Naive thymus-derived CD4-positive, alpha-beta T cell (primary cell): ENCODE measurements at regions of chr2 and their contacts with region 1.

Region 1: DNA sequence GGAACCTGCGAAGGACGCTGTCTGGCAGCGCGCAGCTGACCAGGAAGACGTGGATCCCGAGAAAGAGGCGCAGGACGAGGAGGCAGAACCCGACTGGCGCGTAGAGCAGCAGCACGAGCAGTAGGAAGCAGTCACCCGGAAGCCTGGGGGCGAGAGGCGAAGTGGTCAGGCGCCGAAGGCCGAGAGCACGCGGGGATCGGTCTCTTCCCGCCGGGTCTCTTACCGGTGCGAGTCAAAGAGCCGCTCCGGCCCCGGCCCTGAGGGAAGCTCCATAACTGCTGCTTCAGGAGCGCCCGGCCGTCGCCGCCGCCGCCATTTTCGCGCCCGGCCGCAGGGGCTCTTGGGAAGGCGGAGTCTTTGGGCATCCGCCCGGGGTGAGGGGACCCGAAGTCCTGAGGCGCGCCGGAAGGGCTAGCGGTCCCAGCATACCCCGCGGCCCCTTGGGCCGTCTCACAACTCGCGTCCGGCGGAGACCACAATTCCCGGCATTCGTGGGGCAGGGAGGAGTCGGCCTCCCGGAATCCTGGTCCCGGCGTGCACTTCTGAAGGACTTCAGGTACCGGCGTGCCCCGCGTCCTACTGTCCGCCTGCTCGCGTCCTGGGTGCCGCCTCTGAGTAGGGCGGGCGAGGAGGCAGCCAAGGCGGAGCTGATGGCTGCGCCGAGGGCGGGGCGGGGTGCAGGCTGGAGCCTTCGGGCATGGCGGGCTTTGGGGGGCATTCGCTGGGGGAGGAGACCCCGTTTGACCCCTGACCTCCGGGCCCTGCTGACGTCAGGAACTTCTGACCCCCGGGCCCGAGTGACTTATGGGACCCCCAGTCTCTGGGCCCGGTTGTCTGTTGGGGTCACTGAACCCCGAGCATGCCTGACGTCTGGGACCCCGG is at the starts of genes AUP1 and HTRA2:
- DNase-seq: peak; percentile 75 to 92 (median 83)
- ATAC-seq: peak; percentile 90
- H3K4me3 ChIP-seq: peak within 1 kb of the TSS; percentile 94
- H3K4me3 Mint-ChIP-seq: peak within 1 kb of the TSS; percentile 91 to 98 (median 94)
- H3K27ac ChIP-seq: peak within 1 kb of the TSS; percentile 85
- H3K27ac Mint-ChIP-seq: peak within 1 kb of the TSS; percentile 88 to 97 (median 93)
- H3K4me1 ChIP-seq: peaks cover 11 to 25% of the 10 kb centered on the region in 2 donors
- H3K4me1 Mint-ChIP-seq: peaks cover 25 to 50% (median 43%) of the 10 kb centered on the region in 7 donors
- H3K27me3 ChIP-seq: no peaks in the 10 kb centered on the region
- H3K27me3 Mint-ChIP-seq: no peaks in the 10 kb centered on the region
- total RNA-seq, gene AUP1: 121 to 160 (median 144) TPM
- total RNA-seq, gene HTRA2: 16.9 to 46.2 (median 37.7) TPM

Region 2: GRCh38 chr2:73970850-73971471 is 558.6 kb before region 1 on chr2:
- CTCF ChIA-PET with region 1: no interaction called
- POLR2A ChIA-PET with region 1: no interaction called
- intact Hi-C with region 1: loop called in 1 of 2 experiments (anchors 10 kb)
- DNase-seq: peak in 7 of 9 donors; percentile 60 to 84 (median 72)
- ATAC-seq: peak; percentile 90
- H3K4me3 ChIP-seq: peak overlapping the region; percentile 36
- H3K4me3 Mint-ChIP-seq: peak overlapping the region; percentile 75 to 88 (median 81)
- H3K27ac ChIP-seq: peak overlapping the region; percentile 62
- H3K27ac Mint-ChIP-seq: peak overlapping the region; percentile 84 to 99 (median 93)
- H3K4me1 ChIP-seq: peaks cover 25 to 44% of the 10 kb centered on the region in 2 donors
- H3K4me1 Mint-ChIP-seq: peaks cover 48 to 88% (median 82%) of the 10 kb centered on the region in 7 donors
- H3K27me3 ChIP-seq: no peaks in the 10 kb centered on the region
- H3K27me3 Mint-ChIP-seq: no peaks in the 10 kb centered on the region

Region 3: DNA sequence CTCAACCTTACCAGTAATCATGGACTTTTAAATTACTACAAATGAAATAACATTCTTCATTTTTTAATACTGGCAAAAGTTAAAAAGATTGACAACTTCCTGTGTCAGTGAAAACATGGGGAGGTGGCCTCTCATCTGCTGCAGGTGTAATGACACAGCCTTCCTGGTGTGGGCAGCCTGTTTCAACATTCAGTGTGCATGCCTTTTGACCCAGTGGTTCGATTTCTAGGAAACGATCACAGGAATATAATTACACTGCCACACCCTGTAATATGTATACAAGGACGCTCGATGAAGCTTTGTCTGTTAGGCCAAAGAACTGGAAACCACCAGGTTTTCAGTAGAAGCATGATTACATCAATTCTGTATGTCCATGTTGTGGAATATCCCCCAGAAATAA is 262.5 kb before region 1 on chr2:
- CTCF ChIA-PET with region 1: interaction called, 3 read pairs
- POLR2A ChIA-PET with region 1: no interaction called
- intact Hi-C with region 1: loop called in 1 of 2 experiments (anchors 5 kb)
- DNase-seq: peak in 8 of 9 donors; percentile 41 to 77 (median 66)
- ATAC-seq: peak; percentile 95
- H3K4me3 ChIP-seq: peak overlapping the region; percentile 1
- H3K4me3 Mint-ChIP-seq: peak overlapping the region; percentile 39 to 77 (median 72)
- H3K27ac ChIP-seq: peak overlapping the region; percentile 25
- H3K27ac Mint-ChIP-seq: peak overlapping the region; percentile 9 to 90 (median 80)
- H3K4me1 ChIP-seq: peaks cover 7 to 14% of the 10 kb centered on the region in 2 donors
- H3K4me1 Mint-ChIP-seq: peaks cover 10 to 37% (median 22%) of the 10 kb centered on the region in 7 donors
- H3K27me3 ChIP-seq: no peaks in the 10 kb centered on the region
- H3K27me3 Mint-ChIP-seq: no peaks in the 10 kb centered on the region

Region 4: DNA sequence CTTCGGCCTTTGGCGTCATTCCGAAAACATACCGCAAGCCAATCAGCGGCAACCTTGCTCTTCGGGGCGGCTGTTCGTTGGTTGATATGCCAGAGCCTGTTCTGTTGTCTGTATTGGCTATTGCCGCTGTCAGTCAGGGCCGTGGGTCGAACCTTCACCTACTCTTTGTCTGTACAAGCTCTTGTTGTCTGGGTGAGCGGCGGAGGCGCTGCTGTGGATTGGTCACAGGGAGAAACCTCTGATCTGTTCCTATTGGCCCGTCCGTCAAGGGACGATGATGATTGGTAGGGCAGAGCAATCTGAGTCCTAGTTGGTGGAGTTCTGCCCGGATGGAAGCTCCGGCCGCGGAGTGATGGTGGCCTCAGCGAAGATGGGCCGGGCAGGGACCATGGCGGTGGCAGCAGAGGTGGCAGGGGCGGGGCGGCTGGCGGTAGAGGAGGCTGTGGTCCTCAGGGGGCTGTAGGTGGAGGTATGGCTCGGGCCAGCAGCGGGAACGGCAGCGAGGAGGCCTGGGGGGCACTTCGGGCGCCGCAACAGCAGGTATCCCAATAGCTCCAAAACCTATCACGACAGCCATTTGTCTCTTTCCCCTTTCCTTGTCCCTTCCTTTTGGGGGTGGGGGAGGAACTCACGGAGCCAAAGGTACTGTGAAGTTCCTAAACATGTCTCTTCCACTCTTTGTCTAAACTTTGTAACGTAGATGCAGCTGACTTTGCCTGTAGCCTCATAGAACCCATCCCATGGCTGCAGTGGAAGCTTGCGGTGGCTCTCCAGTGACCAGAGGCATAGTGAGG is 71.3 kb before region 1 on chr2 and contains the start of gene WBP1:
- CTCF ChIA-PET with region 1: interaction called, 6 read pairs
- POLR2A ChIA-PET with region 1: interaction called, 21 read pairs
- intact Hi-C with region 1: loop called (anchors 1 kb)
- DNase-seq: peak in 8 of 9 donors; percentile 85 to 100 (median 100)
- ATAC-seq: peak; percentile 89
- H3K4me3 ChIP-seq: peak within 1 kb of the TSS; percentile 70
- H3K4me3 Mint-ChIP-seq: peak within 1 kb of the TSS; percentile 87 to 99 (median 96)
- H3K27ac ChIP-seq: peak within 1 kb of the TSS; percentile 100
- H3K27ac Mint-ChIP-seq: peak within 1 kb of the TSS; percentile 88 to 100 (median 99)
- H3K4me1 ChIP-seq: peaks cover 30 to 34% of the 10 kb centered on the region in 2 donors
- H3K4me1 Mint-ChIP-seq: peaks cover 38 to 68% (median 58%) of the 10 kb centered on the region in 7 donors
- H3K27me3 ChIP-seq: no peaks in the 10 kb centered on the region
- H3K27me3 Mint-ChIP-seq: peaks cover 0 to 2% (median 0%) of the 10 kb centered on the region in 5 donors
- total RNA-seq, gene WBP1: 53.6 to 127 (median 85.4) TPM

Region 5: GRCh38 chr2:74507145-74507925 is 22.3 kb before region 1 on chr2 and contains the start of gene PCGF1:
- CTCF ChIA-PET with region 1: interaction called, 6 read pairs
- POLR2A ChIA-PET with region 1: interaction called, 22 read pairs
- intact Hi-C with region 1: loop called (anchors 1 kb)
- DNase-seq: peak; percentile 97 to 99 (median 98)
- ATAC-seq: peak; percentile 96
- H3K4me3 ChIP-seq: peak within 1 kb of the TSS; percentile 96
- H3K4me3 Mint-ChIP-seq: peak within 1 kb of the TSS; percentile 95 to 100 (median 99)
- H3K27ac ChIP-seq: peak within 1 kb of the TSS; percentile 94
- H3K27ac Mint-ChIP-seq: peak within 1 kb of the TSS; percentile 97 to 100 (median 100)
- H3K4me1 ChIP-seq: peaks cover 16 to 29% of the 10 kb centered on the region in 2 donors
- H3K4me1 Mint-ChIP-seq: peaks cover 34 to 66% (median 57%) of the 10 kb centered on the region in 7 donors
- H3K27me3 ChIP-seq: peaks cover 3 to 16% of the 10 kb centered on the region in 2 donors
- H3K27me3 Mint-ChIP-seq: peaks cover 47 to 58% (median 49%) of the 10 kb centered on the region in 5 donors
- total RNA-seq, gene PCGF1: 25.7 to 37.0 (median 31.2) TPM

Region 6: GRCh38 chr2:74619651-74620297 is 90.2 kb after region 1 on chr2:
- CTCF ChIA-PET with region 1: no interaction called
- POLR2A ChIA-PET with region 1: no interaction called
- intact Hi-C with region 1: no loop called
- DNase-seq: no peak
- ATAC-seq: no peak
- H3K4me3 ChIP-seq: no peak overlapping the region
- H3K4me3 Mint-ChIP-seq: no peak overlapping the region
- H3K27ac ChIP-seq: no peak overlapping the region
- H3K27ac Mint-ChIP-seq: no peak overlapping the region
- H3K4me1 ChIP-seq: no peaks in the 10 kb centered on the region
- H3K4me1 Mint-ChIP-seq: peaks cover 0 to 7% (median 0%) of the 10 kb centered on the region in 7 donors
- H3K27me3 ChIP-seq: no peaks in the 10 kb centered on the region
- H3K27me3 Mint-ChIP-seq: peaks cover 11 to 21% (median 15%) of the 10 kb centered on the region in 5 donors

Region 7: DNA sequence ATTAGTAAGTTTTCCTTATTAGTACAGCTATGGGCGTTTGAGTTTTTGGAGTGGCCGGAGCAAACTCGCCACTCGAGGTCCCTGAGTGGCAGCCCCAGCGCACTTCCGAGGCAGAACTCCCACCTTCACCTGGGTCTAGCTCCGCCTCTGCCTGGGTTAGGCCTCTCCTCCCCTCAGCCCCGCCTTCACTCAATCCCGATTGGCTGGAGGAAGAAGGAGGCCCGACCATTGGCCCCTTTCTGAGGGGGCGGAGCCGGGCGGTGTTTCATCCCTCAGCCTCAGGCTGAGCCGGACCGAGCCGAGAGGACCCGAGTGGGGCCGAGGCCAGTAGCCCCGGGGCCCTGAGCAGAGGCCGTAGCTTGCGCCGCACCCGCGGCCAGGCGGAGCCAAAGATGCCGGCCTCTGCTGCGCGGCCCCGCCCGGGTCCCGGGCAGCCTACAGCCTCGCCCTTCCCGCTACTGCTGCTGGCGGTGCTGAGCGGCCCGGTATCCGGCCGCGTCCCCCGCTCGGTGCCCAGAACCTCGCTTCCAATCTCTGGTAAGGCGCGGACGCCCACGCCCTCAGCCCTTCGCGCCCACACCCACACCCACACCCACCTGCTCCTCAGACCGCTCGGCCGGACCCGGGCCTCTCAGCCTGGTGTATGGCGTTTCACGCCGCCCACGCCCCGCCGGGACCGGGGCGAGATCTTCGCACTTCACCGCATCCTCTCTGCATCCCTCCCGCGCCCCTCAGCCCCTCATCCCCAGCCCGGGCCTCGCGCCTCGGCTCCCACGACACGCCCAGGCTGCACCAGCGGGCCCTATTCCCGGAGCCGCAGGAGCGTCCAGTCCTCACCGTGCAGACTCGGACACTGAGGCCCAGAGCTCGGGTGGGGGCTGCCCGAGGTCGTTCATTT is 124.6 kb after region 1 on chr2 and contains the start of gene SEMA4F:
- CTCF ChIA-PET with region 1: no interaction called
- POLR2A ChIA-PET with region 1: no interaction called
- intact Hi-C with region 1: loop called in 1 of 2 experiments (anchors 1 kb)
- DNase-seq: peak; percentile 85 to 95 (median 92)
- ATAC-seq: peak; percentile 100
- H3K4me3 ChIP-seq: peak within 1 kb of the TSS; percentile 86
- H3K4me3 Mint-ChIP-seq: peak within 1 kb of the TSS; percentile 82 to 97 (median 90)
- H3K27ac ChIP-seq: peak within 1 kb of the TSS; percentile 75
- H3K27ac Mint-ChIP-seq: peak within 1 kb of the TSS in 8 of 9 donors; percentile 59 to 96 (median 85)
- H3K4me1 ChIP-seq: peaks cover 6 to 8% of the 10 kb centered on the region in 2 donors
- H3K4me1 Mint-ChIP-seq: peaks cover 12 to 34% (median 23%) of the 10 kb centered on the region in 7 donors
- H3K27me3 ChIP-seq: no peaks in the 10 kb centered on the region
- H3K27me3 Mint-ChIP-seq: peaks cover 3 to 21% (median 5%) of the 10 kb centered on the region in 5 donors
- total RNA-seq, gene SEMA4F: 5.7 to 23.6 (median 11.0) TPM

Region 8: GRCh38 chr2:75915851-75916634 is 1386.4 kb after region 1 on chr2:
- CTCF ChIA-PET with region 1: no interaction called
- POLR2A ChIA-PET with region 1: no interaction called
- intact Hi-C with region 1: no loop called
- DNase-seq: no peak
- ATAC-seq: no peak
- H3K4me3 ChIP-seq: no peak overlapping the region
- H3K4me3 Mint-ChIP-seq: no peak overlapping the region
- H3K27ac ChIP-seq: no peak overlapping the region
- H3K27ac Mint-ChIP-seq: no peak overlapping the region
- H3K4me1 ChIP-seq: no peaks in the 10 kb centered on the region
- H3K4me1 Mint-ChIP-seq: no peaks in the 10 kb centered on the region
- H3K27me3 ChIP-seq: no peaks in the 10 kb centered on the region
- H3K27me3 Mint-ChIP-seq: peaks cover 0 to 5% (median 0%) of the 10 kb centered on the region in 5 donors